CD4-positive, alpha-beta memory T cell (primary cell): ENCODE measurements at regions of chr1 and their contacts with region 1.

Region 1: DNA sequence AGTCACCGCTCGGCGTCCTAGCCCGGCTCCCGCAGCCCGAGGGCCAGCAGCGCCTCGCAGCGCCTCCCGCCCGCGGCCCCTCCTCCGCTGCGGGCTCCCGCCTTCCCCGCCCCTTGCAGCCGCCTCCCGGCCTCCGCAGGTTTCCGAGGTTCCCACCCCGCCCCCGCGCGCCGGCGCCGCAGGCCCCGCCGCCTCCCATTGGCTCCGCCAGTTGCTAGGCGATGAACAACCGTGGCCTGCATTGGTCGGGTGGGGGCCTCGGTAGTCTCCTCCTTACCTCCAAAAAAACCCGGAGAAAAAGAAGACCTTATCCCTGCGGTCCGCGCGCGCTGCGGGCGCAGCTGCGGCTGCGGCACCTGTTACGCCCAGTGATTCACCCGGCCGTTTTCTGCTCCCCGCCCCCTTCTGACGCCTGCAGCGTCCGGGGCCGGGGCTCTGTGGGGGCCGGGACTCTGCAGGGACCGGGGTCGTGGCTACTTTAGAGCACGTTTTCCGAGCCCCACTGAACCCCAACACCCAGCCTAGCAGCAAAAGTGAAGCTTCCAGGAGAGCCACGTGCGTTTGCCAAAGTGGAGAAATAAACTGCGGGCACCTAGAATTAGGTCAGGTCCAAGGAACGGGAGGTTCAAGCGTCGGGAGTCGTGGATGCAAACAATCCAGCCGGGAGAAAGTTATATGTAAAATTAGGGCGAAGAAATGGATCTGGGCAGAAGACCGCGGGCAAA is at the start of gene SSX2IP:
- DNase-seq: peak; percentile 98 to 100 (median 99)
- H3K4me3 ChIP-seq: peak within 1 kb of the TSS; percentile 28 to 79
- H3K4me3 Mint-ChIP-seq: peak within 1 kb of the TSS; percentile 87 to 96 (median 92)
- H3K27ac ChIP-seq: peak within 1 kb of the TSS; percentile 87
- H3K27ac Mint-ChIP-seq: peak within 1 kb of the TSS; percentile 90 to 99 (median 97)
- H3K4me1 ChIP-seq: peaks cover 37% of the 10 kb centered on the region
- H3K4me1 Mint-ChIP-seq: peaks cover 45 to 69% (median 45%) of the 10 kb centered on the region in 4 donors
- H3K27me3 ChIP-seq: no peaks in the 10 kb centered on the region
- H3K27me3 Mint-ChIP-seq: no peaks in the 10 kb centered on the region
- total RNA-seq, gene SSX2IP: 7.5 to 8.3 TPM

Region 2: DNA sequence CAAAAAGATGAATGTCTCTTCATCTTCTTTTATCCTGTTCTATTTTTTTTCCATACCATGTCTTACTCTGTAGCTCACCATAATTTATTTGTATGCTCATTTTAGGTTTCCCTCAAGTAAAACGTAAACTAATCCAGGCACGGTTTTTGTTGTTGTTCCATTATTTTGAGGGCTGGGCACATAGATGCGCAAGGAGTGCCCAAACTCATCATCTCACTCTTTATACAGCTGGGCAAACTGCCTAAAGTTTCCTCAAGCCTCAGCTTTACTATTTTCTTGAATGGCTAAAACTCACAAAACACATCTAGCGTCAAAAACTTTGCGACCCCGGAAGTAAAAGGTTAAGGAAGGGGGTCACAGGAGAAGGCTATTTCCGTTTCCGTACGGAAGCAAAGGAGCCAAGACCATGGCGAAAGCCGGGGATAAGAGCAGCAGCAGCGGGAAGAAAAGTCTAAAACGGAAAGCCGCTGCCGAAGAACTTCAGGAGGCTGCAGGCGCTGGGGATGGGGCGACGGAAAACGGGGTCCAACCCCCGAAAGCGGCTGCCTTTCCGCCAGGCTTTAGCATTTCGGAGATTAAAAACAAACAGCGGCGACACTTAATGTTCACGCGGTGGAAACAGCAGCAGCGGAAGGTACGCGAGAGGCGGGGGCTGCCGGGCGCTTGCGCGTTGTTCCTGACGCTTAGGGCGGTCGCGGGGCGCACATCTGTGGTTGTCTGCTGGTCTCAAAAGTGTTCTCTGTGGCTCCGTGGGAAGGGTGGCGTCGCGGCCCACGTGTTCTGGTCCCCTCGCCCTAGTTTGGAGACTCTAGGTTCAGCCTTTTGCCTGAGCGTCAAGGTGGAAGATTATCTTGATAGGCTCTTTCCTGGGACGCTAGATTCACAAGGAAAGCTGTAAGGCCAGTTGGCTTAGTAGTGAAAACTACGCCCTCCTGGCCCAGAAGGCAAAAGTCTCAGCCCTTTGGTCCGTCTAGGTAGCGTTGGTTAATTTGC is 211.4 kb before region 1 on chr1 and contains the start of gene RPF1:
- CTCF ChIA-PET with region 1: no interaction called
- POLR2A ChIA-PET with region 1: interaction called, 3 read pairs
- intact Hi-C with region 1: loop called (anchors 1 kb)
- DNase-seq: peak; percentile 83 to 86 (median 85)
- H3K4me3 ChIP-seq: peak within 1 kb of the TSS; percentile 93
- H3K4me3 Mint-ChIP-seq: peak within 1 kb of the TSS; percentile 96 to 100 (median 99)
- H3K27ac ChIP-seq: peak within 1 kb of the TSS; percentile 65
- H3K27ac Mint-ChIP-seq: peak within 1 kb of the TSS; percentile 96 to 99 (median 98)
- H3K4me1 ChIP-seq: peaks cover 41% of the 10 kb centered on the region
- H3K4me1 Mint-ChIP-seq: peaks cover 31 to 54% (median 41%) of the 10 kb centered on the region in 4 donors
- H3K27me3 ChIP-seq: no peaks in the 10 kb centered on the region
- H3K27me3 Mint-ChIP-seq: peaks cover 13 to 21% of the 10 kb centered on the region in 2 donors
- total RNA-seq, gene RPF1: 41.7 to 46.2 TPM

Region 3: GRCh38 chr1:84620720-84621313 is 69.7 kb before region 1 on chr1:
- CTCF ChIA-PET with region 1: no interaction called
- POLR2A ChIA-PET with region 1: no interaction called
- intact Hi-C with region 1: loop called (anchors 2 kb)
- DNase-seq: peak; percentile 72 to 90 (median 82)
- H3K4me3 ChIP-seq: peak overlapping the region; percentile 47 to 69
- H3K4me3 Mint-ChIP-seq: peak overlapping the region; percentile 89 to 96 (median 93)
- H3K27ac ChIP-seq: no peak overlapping the region
- H3K27ac Mint-ChIP-seq: peak overlapping the region in 6 of 7 donors; percentile 9 to 94 (median 84)
- H3K4me1 ChIP-seq: peaks cover 5% of the 10 kb centered on the region
- H3K4me1 Mint-ChIP-seq: peaks cover 3 to 19% (median 5%) of the 10 kb centered on the region in 4 donors
- H3K27me3 ChIP-seq: no peaks in the 10 kb centered on the region
- H3K27me3 Mint-ChIP-seq: peaks cover 0 to 6% of the 10 kb centered on the region in 2 donors

Region 4: GRCh38 chr1:84724128-84724860 is 33.7 kb after region 1 on chr1:
- CTCF ChIA-PET with region 1: interaction called, 10 read pairs
- POLR2A ChIA-PET with region 1: interaction called, 3 read pairs
- intact Hi-C with region 1: loop called (anchors 5 kb)
- DNase-seq: peak; percentile 22 to 46 (median 40)
- H3K4me3 ChIP-seq: no peak overlapping the region
- H3K4me3 Mint-ChIP-seq: no peak overlapping the region
- H3K27ac ChIP-seq: no peak overlapping the region
- H3K27ac Mint-ChIP-seq: peak overlapping the region in 1 of 7 donors; percentile 54
- H3K4me1 ChIP-seq: no peaks in the 10 kb centered on the region
- H3K4me1 Mint-ChIP-seq: peaks cover 0 to 1% (median 0%) of the 10 kb centered on the region in 4 donors
- H3K27me3 ChIP-seq: no peaks in the 10 kb centered on the region
- H3K27me3 Mint-ChIP-seq: peaks cover 0 to 5% of the 10 kb centered on the region in 2 donors

Region 5: GRCh38 chr1:85200870-85201339 is 510.3 kb after region 1 on chr1 and contains the start of gene SYDE2:
- CTCF ChIA-PET with region 1: no interaction called
- POLR2A ChIA-PET with region 1: no interaction called
- intact Hi-C with region 1: loop called (anchors 1 kb)
- DNase-seq: peak; percentile 84 to 89 (median 86)
- H3K4me3 ChIP-seq: peak within 1 kb of the TSS; percentile 72 to 73
- H3K4me3 Mint-ChIP-seq: peak within 1 kb of the TSS; percentile 96 to 99 (median 98)
- H3K27ac ChIP-seq: peak within 1 kb of the TSS; percentile 82
- H3K27ac Mint-ChIP-seq: peak within 1 kb of the TSS; percentile 97 to 99 (median 98)
- H3K4me1 ChIP-seq: peaks cover 27% of the 10 kb centered on the region
- H3K4me1 Mint-ChIP-seq: peaks cover 18 to 37% (median 27%) of the 10 kb centered on the region in 4 donors
- H3K27me3 ChIP-seq: no peaks in the 10 kb centered on the region
- H3K27me3 Mint-ChIP-seq: peaks cover 2 to 3% of the 10 kb centered on the region in 2 donors
- total RNA-seq, gene SYDE2: 5.0 to 5.2 TPM

Region 6: DNA sequence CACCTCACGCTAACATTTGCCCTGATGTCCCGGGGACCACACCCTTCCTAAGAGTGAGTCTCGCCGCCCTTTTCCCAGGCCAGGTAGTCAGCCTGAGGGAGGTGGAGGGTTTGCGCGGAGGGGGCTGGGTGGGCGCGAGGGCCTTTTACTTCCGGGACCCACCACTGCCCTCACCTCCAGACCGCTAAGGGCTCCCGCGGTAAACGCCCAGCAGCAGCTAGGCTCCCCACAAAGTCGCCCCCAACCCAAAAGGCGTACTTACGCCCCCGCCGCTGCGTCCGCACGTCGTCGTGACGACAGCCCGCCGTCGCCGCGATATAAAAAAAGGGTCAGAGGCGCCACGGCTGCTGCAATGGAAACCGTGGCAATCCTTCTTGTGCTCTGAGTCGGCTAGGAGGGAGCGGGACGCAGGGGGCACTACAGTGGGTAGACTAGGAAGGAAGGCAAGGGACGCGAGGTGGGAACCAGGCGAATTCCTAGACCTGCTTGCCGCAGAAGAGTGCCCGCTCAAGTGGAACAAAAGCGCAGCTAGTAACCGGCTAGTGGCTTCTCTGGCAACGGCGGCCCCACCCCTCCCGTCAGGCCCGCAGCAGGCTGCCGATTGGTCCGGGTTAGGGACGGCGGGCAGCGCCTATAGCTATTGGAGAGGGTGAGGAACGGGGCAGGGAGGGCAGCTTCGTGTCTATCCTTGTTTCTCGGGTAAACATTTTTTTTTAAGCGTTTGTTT is 1705.4 kb after region 1 on chr1 and contains the start of gene ODF2L:
- CTCF ChIA-PET with region 1: no interaction called
- POLR2A ChIA-PET with region 1: no interaction called
- intact Hi-C with region 1: loop called (anchors 10 kb)
- DNase-seq: peak; percentile 90 to 94 (median 92)
- H3K4me3 ChIP-seq: peak within 1 kb of the TSS; percentile 77 to 87
- H3K4me3 Mint-ChIP-seq: peak within 1 kb of the TSS; percentile 94 to 99 (median 98)
- H3K27ac ChIP-seq: peak within 1 kb of the TSS; percentile 92
- H3K27ac Mint-ChIP-seq: peak within 1 kb of the TSS; percentile 97 to 100 (median 99)
- H3K4me1 ChIP-seq: peaks cover 56% of the 10 kb centered on the region
- H3K4me1 Mint-ChIP-seq: peaks cover 43 to 68% (median 51%) of the 10 kb centered on the region in 4 donors
- H3K27me3 ChIP-seq: no peaks in the 10 kb centered on the region
- H3K27me3 Mint-ChIP-seq: no peaks in the 10 kb centered on the region
- total RNA-seq, gene ODF2L: 97.3 to 98.3 TPM